ENCODE measurements at regions of chr13 and their contacts with region 1.

Region 1: GRCh38 chr13:110914331-110915056 is 375 bp downstream of the ANKRD10 start:
- DNase-seq: peak; percentile 60

Region 2: DNA sequence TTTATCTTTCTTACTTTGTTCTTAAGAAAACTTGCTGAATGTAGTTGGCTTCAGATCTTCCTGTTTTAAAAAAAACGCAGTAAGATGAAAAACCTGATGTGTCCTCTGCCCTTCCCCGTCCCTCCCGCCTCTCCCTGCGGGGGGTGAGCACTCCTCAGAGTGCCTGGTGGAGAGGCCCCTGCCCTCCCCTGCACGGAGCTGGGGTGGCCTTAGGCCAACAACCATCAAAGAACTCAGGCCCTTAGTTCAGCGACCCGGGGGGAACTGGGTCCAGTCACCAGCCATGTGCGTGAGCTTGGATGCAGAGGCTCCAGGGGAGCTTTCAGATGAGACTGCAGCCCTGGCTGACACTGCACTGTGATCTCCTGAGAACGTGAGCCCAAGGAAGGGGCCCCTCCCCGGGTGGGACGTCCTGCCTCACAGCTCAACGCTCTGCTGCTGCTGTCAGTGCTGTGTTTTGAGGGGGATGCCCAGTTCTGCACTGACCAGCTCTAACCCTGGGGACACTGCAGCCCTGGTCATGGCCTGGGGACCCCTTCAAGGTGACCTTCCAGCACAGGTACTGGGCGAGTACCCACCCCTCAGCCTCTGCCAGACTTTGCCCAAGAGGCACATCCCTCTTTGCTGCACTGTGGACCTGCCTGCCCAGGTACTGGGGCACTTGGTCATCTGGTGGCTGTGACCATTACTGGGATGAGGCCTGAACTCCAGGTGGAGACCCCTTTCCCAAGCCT is 42.3 kb before region 1 on chr13:
- CTCF ChIA-PET with region 1: interaction called, 3 read pairs
- POLR2A ChIA-PET with region 1: interaction called, 10 read pairs
- DNase-seq: no peak